ENCODE measurements at regions of chr11 and their contacts with region 1.

Region 1: GRCh38 chr11:44556735-44557409 is 8.6 kb upstream of the CD82 start:
- DNase-seq: peak; percentile 88
- H3K4me3 ChIP-seq: no peak overlapping the region
- H3K27ac ChIP-seq: peak overlapping the region in 7 of 8 donors; percentile 20 to 81 (median 60)
- H3K4me1 ChIP-seq: peaks cover 15 to 69% (median 37%) of the 10 kb centered on the region in 6 donors
- H3K27me3 ChIP-seq: no peaks in the 10 kb centered on the region
- CTCF ChIP-seq: peak; percentile 64 to 89 (median 77)
- POLR2A ChIP-seq: no peak

Region 2: GRCh38 chr11:44609001-44609782 is 52.3 kb after region 1 on chr11:
- intact Hi-C with region 1: loop called (anchors 2 kb)
- DNase-seq: peak; percentile 89
- H3K4me3 ChIP-seq: peak overlapping the region in 1 of 8 donors; percentile 37
- H3K27ac ChIP-seq: peak overlapping the region; percentile 4 to 88 (median 73)
- H3K4me1 ChIP-seq: peaks cover 44 to 91% (median 74%) of the 10 kb centered on the region in 6 donors
- H3K27me3 ChIP-seq: no peaks in the 10 kb centered on the region
- CTCF ChIP-seq: no peak
- POLR2A ChIP-seq: no peak

Region 3: GRCh38 chr11:44621140-44621681 is 64.3 kb after region 1 on chr11:
- intact Hi-C with region 1: loop called (anchors 2 kb)
- DNase-seq: peak; percentile 91
- H3K4me3 ChIP-seq: no peak overlapping the region
- H3K27ac ChIP-seq: no peak overlapping the region
- H3K4me1 ChIP-seq: peaks cover 20 to 67% (median 41%) of the 10 kb centered on the region in 6 donors
- H3K27me3 ChIP-seq: no peaks in the 10 kb centered on the region
- CTCF ChIP-seq: peak; percentile 63 to 96 (median 88)
- POLR2A ChIP-seq: no peak

Region 4: DNA sequence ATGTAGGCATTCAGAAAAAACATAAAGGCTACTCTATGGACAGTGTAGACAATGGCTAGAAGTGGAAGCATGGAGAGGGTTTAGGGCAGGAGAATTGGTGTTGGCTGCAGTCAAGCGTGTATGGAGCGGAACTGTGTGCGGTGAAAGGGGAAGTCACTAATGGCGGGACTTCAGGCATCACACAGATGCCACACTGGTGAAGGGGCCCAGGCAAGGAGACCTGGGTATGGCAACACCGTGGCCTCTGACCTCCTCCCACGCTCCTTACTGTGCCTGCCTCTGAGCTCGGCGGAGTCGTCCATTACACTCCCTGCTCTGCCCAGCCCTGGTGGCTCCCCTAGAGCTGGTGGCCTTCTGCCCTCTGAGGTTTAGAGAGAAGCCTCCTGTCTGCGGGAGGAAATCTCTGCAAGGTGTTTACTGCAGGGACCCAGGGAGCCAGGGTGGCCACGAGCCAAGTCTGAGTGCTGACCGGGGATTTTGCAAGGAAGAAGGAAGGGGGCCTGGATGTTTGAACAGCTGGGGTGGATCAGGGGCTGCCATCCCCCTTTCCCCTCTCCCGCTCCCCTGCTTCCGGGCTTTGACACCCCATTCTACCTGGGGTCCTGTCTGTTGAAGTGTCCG is 94.8 kb after region 1 on chr11:
- intact Hi-C with region 1: no loop called
- DNase-seq: peak; percentile 71
- H3K4me3 ChIP-seq: no peak overlapping the region
- H3K27ac ChIP-seq: no peak overlapping the region
- H3K4me1 ChIP-seq: peaks cover 0 to 7% (median 0%) of the 10 kb centered on the region in 6 donors
- H3K27me3 ChIP-seq: peaks cover 0 to 21% (median 0%) of the 10 kb centered on the region in 7 donors
- CTCF ChIP-seq: no peak
- POLR2A ChIP-seq: no peak